ENCODE measurements at regions of chr20 and their contacts with region 1.

Region 1: DNA sequence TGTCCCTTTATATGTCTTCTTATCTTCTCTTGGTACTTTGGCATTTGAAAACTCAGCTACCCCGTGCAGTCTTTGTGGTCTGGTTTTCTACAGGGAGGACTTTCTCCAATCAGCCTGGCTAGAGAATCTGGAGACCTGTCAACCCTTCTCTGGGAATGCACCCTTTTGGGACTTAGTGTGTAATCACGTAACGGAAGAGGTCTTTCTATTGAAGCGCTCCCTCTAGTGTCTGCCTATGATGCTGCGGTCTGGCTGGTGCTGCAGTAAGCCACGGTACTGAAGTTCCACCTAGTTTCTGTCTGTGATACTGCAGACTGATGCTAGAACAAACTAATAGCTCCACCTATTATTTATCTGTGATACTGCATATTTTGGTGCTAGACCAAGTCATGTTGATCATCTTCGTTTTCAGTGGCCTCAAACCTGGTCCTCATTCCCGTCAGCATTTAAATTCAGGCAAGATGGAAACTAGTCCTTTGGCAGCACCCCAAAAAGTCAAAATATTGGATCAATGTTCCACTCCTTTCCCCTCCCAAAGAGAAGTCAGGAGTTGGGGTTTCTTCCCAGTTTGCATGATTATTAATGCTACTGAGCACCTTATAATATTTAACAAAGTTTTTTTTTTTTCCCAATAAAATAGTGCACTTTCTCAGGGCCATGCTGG is 12.5 kb upstream of the SIRPB2 start:
- DNase-seq: peak; percentile 88
- ATAC-seq: peak; percentile 100
- H3K4me3 Mint-ChIP-seq: no peak overlapping the region
- H3K27ac Mint-ChIP-seq: no peak overlapping the region
- H3K4me1 Mint-ChIP-seq: peaks cover 6% of the 10 kb centered on the region
- H3K27me3 Mint-ChIP-seq: peaks cover 19% of the 10 kb centered on the region

Region 2: GRCh38 chr20:1301031-1301529 is 202.6 kb before region 1 on chr20:
- CTCF ChIA-PET with region 1: interaction called, 4 read pairs
- POLR2A ChIA-PET with region 1: no interaction called
- intact Hi-C with region 1: loop called in 1 of 2 experiments (anchors 1 kb)
- DNase-seq: peak; percentile 76
- ATAC-seq: peak; percentile 96
- H3K4me3 Mint-ChIP-seq: peak overlapping the region; percentile 32
- H3K27ac Mint-ChIP-seq: peak overlapping the region; percentile 84
- H3K4me1 Mint-ChIP-seq: peaks cover 18% of the 10 kb centered on the region
- H3K27me3 Mint-ChIP-seq: no peaks in the 10 kb centered on the region

Region 3: GRCh38 chr20:1313236-1313964 is 190.3 kb before region 1 on chr20:
- CTCF ChIA-PET with region 1: interaction called, 5 read pairs
- POLR2A ChIA-PET with region 1: no interaction called
- intact Hi-C with region 1: loop called in 1 of 2 experiments (anchors 1 kb)
- DNase-seq: peak; percentile 82
- ATAC-seq: peak; percentile 89
- H3K4me3 Mint-ChIP-seq: no peak overlapping the region
- H3K27ac Mint-ChIP-seq: no peak overlapping the region
- H3K4me1 Mint-ChIP-seq: peaks cover 3% of the 10 kb centered on the region
- H3K27me3 Mint-ChIP-seq: no peaks in the 10 kb centered on the region

Measured in activated CD4-positive, alpha-beta T cell treated with anti-CD3 and anti-CD28 coated beads for 36 hours (primary cell).